Body of pancreas (tissue), 4 donors: ENCODE measurements at regions of chr6 and their contacts with region 1.

Region 1: GRCh38 chr6:132219901-132220300 is 181.4 kb downstream of the MOXD1 start:
- DNase-seq: no peak
- ATAC-seq: no peak
- H3K4me3 ChIP-seq: no peak overlapping the region
- H3K27ac ChIP-seq: no peak overlapping the region
- H3K4me1 ChIP-seq: no peaks in the 10 kb centered on the region
- H3K27me3 ChIP-seq: no peaks in the 10 kb centered on the region
- CTCF ChIP-seq: no peak
- POLR2A ChIP-seq: no peak

Region 2: DNA sequence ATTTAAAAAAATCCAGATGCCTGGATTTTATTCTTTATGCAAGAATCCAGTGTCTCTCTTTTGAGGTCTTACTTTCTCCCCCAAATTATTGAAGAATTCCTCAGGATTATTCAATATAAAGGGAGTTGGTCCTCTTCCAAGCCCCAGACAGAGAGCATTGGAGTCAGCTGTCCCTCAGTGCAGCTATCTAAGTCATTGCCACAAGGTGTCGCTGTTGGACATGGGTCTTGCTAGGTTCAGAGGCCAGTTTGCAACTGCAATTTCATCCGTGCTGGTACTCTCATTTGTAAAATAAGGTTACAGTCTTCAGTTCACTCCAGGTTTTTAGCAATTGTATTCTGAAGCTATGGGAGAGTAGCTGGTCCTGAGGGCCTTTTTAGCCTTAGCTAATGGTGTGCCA is 296.5 kb before region 1 on chr6:
- intact Hi-C with region 1: loop called (anchors 5 kb)
- DNase-seq: peak; percentile 62 to 70 (median 67)
- ATAC-seq: peak; percentile 48
- H3K4me3 ChIP-seq: no peak overlapping the region
- H3K27ac ChIP-seq: no peak overlapping the region
- H3K4me1 ChIP-seq: no peaks in the 10 kb centered on the region
- H3K27me3 ChIP-seq: no peaks in the 10 kb centered on the region
- CTCF ChIP-seq: peak; percentile 30 to 64 (median 54)
- POLR2A ChIP-seq: no peak

Region 3: GRCh38 chr6:132167929-132168892 is 51.7 kb before region 1 on chr6:
- intact Hi-C with region 1: no loop called
- DNase-seq: no peak
- ATAC-seq: peak; percentile 62
- H3K4me3 ChIP-seq: no peak overlapping the region
- H3K27ac ChIP-seq: peak overlapping the region in 2 of 4 donors; percentile 50 to 54
- H3K4me1 ChIP-seq: no peaks in the 10 kb centered on the region
- H3K27me3 ChIP-seq: no peaks in the 10 kb centered on the region
- CTCF ChIP-seq: no peak
- POLR2A ChIP-seq: no peak